AG04449 (cell line): ENCODE measurements at regions of chr10 and their contacts with region 1.

Region 1: GRCh38 chr10:87531908-87532622 is 27.4 kb downstream of the MINPP1 start:
- DNase-seq: no peak
- H3K4me3 ChIP-seq: no peak overlapping the region
- CTCF ChIP-seq: no peak

Region 2: DNA sequence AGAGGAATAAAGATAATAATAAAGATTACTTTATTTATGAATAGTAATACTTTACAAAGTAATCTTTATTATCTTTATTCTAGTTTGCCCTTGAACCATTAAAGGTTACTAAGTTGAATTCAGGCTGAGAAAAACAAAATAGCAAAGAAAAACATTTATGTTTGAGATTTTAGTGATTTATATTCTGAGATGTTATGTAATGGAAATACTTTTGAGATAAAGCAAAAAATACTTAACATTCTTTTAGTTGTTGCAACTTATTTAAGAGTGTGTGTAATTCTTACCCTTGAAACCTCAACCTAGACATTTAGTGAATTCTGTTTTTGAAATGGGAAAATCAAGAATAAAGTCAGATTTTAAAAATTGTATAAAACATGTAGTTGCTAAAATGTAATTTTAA is 12.7 kb after region 1 on chr10:
- CTCF ChIA-PET with region 1: interaction called, 19 read pairs
- POLR2A ChIA-PET with region 1: no interaction called
- DNase-seq: no peak
- H3K4me3 ChIP-seq: no peak overlapping the region
- CTCF ChIP-seq: no peak

Region 3: GRCh38 chr10:87675396-87676376 is 143.6 kb after region 1 on chr10:
- CTCF ChIA-PET with region 1: no interaction called
- POLR2A ChIA-PET with region 1: no interaction called
- DNase-seq: peak; percentile 85
- H3K4me3 ChIP-seq: no peak overlapping the region
- CTCF ChIP-seq: no peak

Region 4: DNA sequence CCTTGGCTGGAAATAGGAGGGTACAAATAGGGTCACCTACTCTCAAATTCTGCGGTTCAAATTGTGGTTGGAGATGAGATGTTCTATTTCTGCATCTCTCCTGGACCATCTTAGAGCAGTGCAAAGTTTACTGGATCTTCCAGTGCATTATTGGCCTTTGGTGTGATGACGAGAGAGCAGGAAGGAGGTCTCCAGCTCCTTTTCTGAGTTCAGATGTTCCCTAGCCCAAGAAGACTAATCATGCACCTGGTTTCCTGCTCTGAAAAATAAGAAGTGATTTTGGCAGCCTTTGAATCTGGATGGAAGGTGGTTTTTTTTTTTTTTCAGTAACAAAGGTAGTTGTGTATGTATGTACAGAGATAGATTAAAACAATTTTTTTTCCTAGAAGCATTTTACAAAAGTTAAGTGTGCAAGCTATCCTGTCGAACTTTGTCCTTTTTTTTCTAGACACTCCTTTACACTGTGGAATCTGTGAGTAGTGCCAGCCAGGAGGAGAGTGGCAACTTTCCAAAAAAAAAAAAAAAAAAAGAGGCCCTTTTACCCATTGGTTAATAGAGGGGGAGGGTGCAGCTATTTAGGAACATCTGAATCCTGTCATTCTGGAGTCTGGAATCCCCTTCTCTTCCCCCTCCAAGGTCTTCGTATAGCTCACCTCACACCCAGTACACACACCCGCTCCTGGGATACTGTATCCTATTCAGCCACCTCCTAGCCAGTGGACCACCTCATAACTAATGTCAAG is 153.9 kb after region 1 on chr10:
- CTCF ChIA-PET with region 1: no interaction called
- POLR2A ChIA-PET with region 1: no interaction called
- DNase-seq: no peak
- H3K4me3 ChIP-seq: no peak overlapping the region
- CTCF ChIP-seq: no peak